Dorsolateral prefrontal cortex (tissue), 120 donors: ENCODE measurements at regions of chr11 and their contacts with region 1.

Region 1: GRCh38 chr11:133821776-133822175 is 23.5 kb downstream of the SPATA19 start:
- DNase-seq: peak; percentile 49 to 88 (median 76)
- H3K4me3 ChIP-seq: no peak overlapping the region
- H3K27ac ChIP-seq: no peak overlapping the region
- H3K27me3 ChIP-seq: peaks cover 0 to 4% (median 0%) of the 10 kb centered on the region in 45 donors
- CTCF ChIP-seq: peak; percentile 49 to 84 (median 75)

Region 2: GRCh38 chr11:133134314-133135173 is 687.2 kb before region 1 on chr11:
- intact Hi-C with region 1: loop called (anchors 5 kb)
- DNase-seq: peak; percentile 33 to 76 (median 64)
- H3K4me3 ChIP-seq: no peak overlapping the region
- H3K27ac ChIP-seq: peak overlapping the region in 3 of 59 donors; percentile 3 to 9 (median 5)
- H3K27me3 ChIP-seq: peaks cover 0 to 10% (median 0%) of the 10 kb centered on the region in 45 donors
- CTCF ChIP-seq: peak; percentile 66 to 98 (median 90)

Region 3: GRCh38 chr11:133692126-133692934 is 129.4 kb before region 1 on chr11:
- intact Hi-C with region 1: loop called in 1 of 2 experiments (anchors 5 kb)
- DNase-seq: peak in 5 of 10 donors; percentile 6 to 62 (median 57)
- H3K4me3 ChIP-seq: no peak overlapping the region
- H3K27ac ChIP-seq: peak overlapping the region in 27 of 59 donors; percentile 6 to 76 (median 45)
- H3K27me3 ChIP-seq: no peaks in the 10 kb centered on the region
- CTCF ChIP-seq: no peak